Mammary epithelial cell (primary cell): ENCODE measurements at regions of chr10 and their contacts with region 1.

Region 1: DNA sequence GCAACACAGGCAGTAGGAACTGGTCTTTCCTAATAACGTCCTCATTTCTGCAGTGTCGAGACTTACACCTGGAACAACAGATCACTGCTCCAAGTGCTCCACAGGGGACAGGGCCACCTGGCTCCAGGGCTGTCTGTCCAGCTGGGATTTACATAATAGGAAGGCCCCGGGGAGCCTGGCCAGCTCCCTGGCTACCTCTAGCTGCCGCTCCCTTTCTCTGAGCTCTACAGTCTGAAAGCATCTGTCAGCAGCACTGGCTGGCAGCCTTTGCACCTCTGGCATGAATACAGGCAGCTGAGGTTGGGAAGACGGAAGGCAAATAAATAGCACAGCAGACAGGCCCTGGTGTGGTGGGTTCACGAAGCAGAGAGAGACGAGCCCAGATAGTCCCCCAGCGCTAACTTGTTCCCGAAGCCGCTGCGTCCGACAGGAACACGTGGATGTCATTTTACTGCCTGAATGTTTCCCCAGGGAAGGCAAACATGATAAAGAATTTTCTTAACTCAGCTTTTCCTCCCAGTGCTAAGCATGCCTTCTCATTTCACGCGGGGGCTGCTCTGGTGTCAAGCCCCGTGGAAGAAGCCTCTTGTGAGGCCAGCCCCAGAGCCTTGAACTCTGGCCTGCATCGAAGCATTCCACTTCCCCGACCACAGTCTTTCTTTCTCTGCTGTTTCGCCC is 105.4 kb downstream of the ITIH5 start:
- DNase-seq: no peak
- H3K4me3 ChIP-seq: no peak overlapping the region
- H3K27ac ChIP-seq: no peak overlapping the region
- H3K4me1 ChIP-seq: no peaks in the 10 kb centered on the region
- H3K27me3 ChIP-seq: no peaks in the 10 kb centered on the region
- CTCF ChIP-seq: no peak

Region 2: GRCh38 chr10:7475046-7475911 is 86.1 kb before region 1 on chr10:
- CTCF ChIA-PET with region 1: no interaction called
- dilution Hi-C with region 1: loop called (anchors 5 kb)
- in situ Hi-C with region 1: no loop called
- intact Hi-C with region 1: no loop called
- DNase-seq: no peak
- H3K4me3 ChIP-seq: no peak overlapping the region
- H3K27ac ChIP-seq: no peak overlapping the region
- H3K4me1 ChIP-seq: no peaks in the 10 kb centered on the region
- H3K27me3 ChIP-seq: no peaks in the 10 kb centered on the region
- CTCF ChIP-seq: no peak

Region 3: GRCh38 chr10:7649673-7650300 is 88.4 kb after region 1 on chr10:
- CTCF ChIA-PET with region 1: no interaction called
- dilution Hi-C with region 1: loop called (anchors 5 kb)
- in situ Hi-C with region 1: no loop called
- intact Hi-C with region 1: no loop called
- DNase-seq: no peak
- H3K4me3 ChIP-seq: no peak overlapping the region
- H3K27ac ChIP-seq: no peak overlapping the region
- H3K4me1 ChIP-seq: no peaks in the 10 kb centered on the region
- H3K27me3 ChIP-seq: no peaks in the 10 kb centered on the region
- CTCF ChIP-seq: no peak

Region 4: DNA sequence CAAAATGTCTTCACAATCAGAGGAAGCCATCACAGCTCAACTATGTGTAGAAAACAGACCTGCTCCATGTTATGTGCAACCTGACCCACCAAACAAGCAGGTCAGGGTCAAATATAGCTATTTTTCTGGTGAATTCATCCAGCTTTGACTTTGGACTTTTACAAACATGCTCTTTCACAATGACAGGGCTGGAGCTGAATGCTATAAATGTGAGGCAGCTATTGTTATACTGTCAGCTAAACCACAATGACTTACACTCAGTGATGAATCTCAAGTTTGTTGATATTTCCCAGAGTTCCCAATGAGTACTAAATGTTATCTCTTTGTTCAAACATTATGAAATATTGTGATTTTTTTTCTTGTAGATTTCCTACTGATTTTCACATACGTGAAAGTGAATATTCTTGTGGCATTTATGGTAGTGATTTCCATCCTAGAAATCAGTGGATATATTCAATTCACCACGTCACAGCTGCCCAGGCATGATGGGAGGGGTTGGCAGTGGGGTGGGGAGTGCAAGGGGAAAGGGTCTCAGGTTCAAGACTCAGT is 139.3 kb after region 1 on chr10:
- CTCF ChIA-PET with region 1: no interaction called
- dilution Hi-C with region 1: no loop called
- in situ Hi-C with region 1: no loop called
- intact Hi-C with region 1: no loop called
- DNase-seq: peak; percentile 52
- H3K4me3 ChIP-seq: no peak overlapping the region
- H3K27ac ChIP-seq: no peak overlapping the region
- H3K4me1 ChIP-seq: no peaks in the 10 kb centered on the region
- H3K27me3 ChIP-seq: no peaks in the 10 kb centered on the region
- CTCF ChIP-seq: no peak

Region 5: GRCh38 chr10:7756360-7756992 is 195.1 kb after region 1 on chr10:
- CTCF ChIA-PET with region 1: interaction called, 13 read pairs
- dilution Hi-C with region 1: no loop called
- in situ Hi-C with region 1: no loop called
- intact Hi-C with region 1: no loop called
- DNase-seq: peak; percentile 14
- H3K4me3 ChIP-seq: no peak overlapping the region
- H3K27ac ChIP-seq: no peak overlapping the region
- H3K4me1 ChIP-seq: no peaks in the 10 kb centered on the region
- H3K27me3 ChIP-seq: no peaks in the 10 kb centered on the region
- CTCF ChIP-seq: peak; percentile 30 to 57